CD14-positive monocyte (primary cell): ENCODE measurements at regions of chr1 and their contacts with region 1.

Region 1: GRCh38 chr1:13748610-13749505 is 48.9 kb downstream of the PRDM2 start:
- DNase-seq: peak; percentile 94 to 95 (median 94)
- H3K4me3 ChIP-seq: peak overlapping the region; percentile 60 to 97 (median 97)
- H3K4me3 Mint-ChIP-seq: peak overlapping the region; percentile 89 to 94
- H3K27ac ChIP-seq: peak overlapping the region; percentile 87 to 95
- H3K27ac Mint-ChIP-seq: peak overlapping the region; percentile 93 to 97 (median 95)
- H3K4me1 ChIP-seq: peaks cover 30 to 55% of the 10 kb centered on the region in 2 donors
- H3K4me1 Mint-ChIP-seq: peaks cover 49% of the 10 kb centered on the region
- H3K27me3 ChIP-seq: no peaks in the 10 kb centered on the region
- H3K27me3 Mint-ChIP-seq: no peaks in the 10 kb centered on the region
- CTCF ChIP-seq: no peak

Region 2: DNA sequence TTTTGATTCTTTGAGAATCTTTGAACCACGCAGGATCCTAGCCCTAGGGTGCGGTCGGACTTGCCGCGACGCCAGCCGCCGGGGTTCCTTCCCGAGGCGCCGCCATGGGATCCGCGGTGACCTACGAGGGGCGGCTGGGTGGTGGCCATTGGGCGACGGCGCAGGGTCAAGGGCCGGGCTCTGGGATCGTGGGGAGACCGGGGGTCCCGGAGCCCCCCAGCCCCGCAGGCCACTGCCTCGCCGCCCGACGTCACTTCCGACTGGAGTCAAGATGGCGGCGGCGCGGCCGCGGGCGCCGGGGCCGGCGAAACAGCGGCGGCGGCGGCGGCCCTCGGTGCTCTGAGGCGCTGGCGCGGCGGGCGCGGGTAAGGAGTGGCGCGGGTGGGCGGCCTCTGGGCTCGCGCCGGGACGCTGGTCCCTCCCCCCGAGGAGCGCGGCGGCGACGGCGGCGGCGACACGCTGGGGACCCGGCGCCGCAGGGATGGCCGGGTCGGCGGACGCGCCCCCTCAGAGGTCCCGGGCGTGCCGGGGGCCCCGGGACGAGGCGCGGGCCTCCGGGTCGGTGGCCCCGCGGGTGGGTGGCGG is 48.8 kb before region 1 on chr1 and contains the start of gene PRDM2:
- intact Hi-C with region 1: loop called in 1 of 2 experiments (anchors 5 kb)
- DNase-seq: peak; percentile 32 to 50 (median 49)
- H3K4me3 ChIP-seq: peak within 1 kb of the TSS; percentile 61 to 82 (median 81)
- H3K4me3 Mint-ChIP-seq: peak within 1 kb of the TSS; percentile 93 to 98
- H3K27ac ChIP-seq: peak within 1 kb of the TSS; percentile 61 to 94
- H3K27ac Mint-ChIP-seq: peak within 1 kb of the TSS; percentile 85 to 93 (median 88)
- H3K4me1 ChIP-seq: peaks cover 16 to 24% of the 10 kb centered on the region in 2 donors
- H3K4me1 Mint-ChIP-seq: peaks cover 30% of the 10 kb centered on the region
- H3K27me3 ChIP-seq: no peaks in the 10 kb centered on the region
- H3K27me3 Mint-ChIP-seq: peaks cover 3 to 10% (median 4%) of the 10 kb centered on the region in 3 donors
- CTCF ChIP-seq: no peak
- polyA plus RNA-seq, gene PRDM2: 4.1 to 22.5 (median 7.6) TPM

Region 3: GRCh38 chr1:13888351-13888986 is 139.6 kb after region 1 on chr1:
- intact Hi-C with region 1: no loop called
- DNase-seq: no peak
- H3K4me3 ChIP-seq: no peak overlapping the region
- H3K4me3 Mint-ChIP-seq: no peak overlapping the region
- H3K27ac ChIP-seq: no peak overlapping the region
- H3K27ac Mint-ChIP-seq: no peak overlapping the region
- H3K4me1 ChIP-seq: no peaks in the 10 kb centered on the region
- H3K4me1 Mint-ChIP-seq: no peaks in the 10 kb centered on the region
- H3K27me3 ChIP-seq: peaks cover 49 to 58% of the 10 kb centered on the region in 2 donors
- H3K27me3 Mint-ChIP-seq: peaks cover 11 to 30% (median 29%) of the 10 kb centered on the region in 3 donors
- CTCF ChIP-seq: no peak